MCF 10A (cell line): ENCODE measurements at regions of chr10 and their contacts with region 1.

Region 1: GRCh38 chr10:61903221-61903927 is 1.9 kb downstream of the ARID5B start:
- DNase-seq: peak; percentile 68
- H3K4me3 Mint-ChIP-seq: peak overlapping the region; percentile 90
- H3K27ac Mint-ChIP-seq: peak overlapping the region; percentile 100
- H3K4me1 Mint-ChIP-seq: peaks cover 16% of the 10 kb centered on the region
- H3K27me3 Mint-ChIP-seq: no peaks in the 10 kb centered on the region
- CTCF ChIP-seq: peak; percentile 22

Region 2: DNA sequence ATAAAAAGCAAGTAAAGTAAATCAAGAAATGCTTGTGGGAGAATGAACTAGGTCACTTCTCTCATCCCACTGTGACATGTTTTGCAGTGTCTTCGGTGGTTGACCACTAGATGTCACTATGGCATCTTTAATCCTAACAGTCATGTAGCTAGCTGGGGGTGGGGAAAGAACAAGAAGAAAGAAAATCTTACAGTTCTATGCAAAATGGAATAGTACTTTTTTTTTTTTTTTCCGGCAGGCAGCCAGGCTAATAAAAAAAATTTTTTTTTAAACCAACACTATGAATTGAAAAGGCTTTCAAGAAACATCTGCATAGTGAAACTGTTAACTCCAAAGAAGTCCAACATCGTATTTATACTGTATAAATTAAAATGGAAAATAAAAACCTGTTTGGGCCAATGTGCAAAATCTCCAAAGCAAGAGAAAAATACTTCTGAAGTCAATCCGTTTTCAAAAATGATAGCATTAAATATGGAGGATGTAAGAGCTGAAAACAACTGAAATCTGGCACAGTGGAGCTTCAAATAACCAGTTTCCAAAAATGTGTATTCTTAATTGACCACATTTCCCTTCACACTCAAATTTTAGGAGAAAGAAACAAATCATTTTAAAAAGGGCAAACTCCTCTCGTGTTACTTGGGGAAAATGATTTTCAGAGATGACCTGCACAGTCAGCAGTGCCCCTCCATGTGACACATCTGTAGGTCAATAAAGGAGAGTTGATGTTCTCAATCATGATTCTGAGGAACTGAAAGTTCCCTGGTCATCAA is 1086.6 kb before region 1 on chr10:
- CTCF ChIA-PET with region 1: interaction called, 5 read pairs
- POLR2A ChIA-PET with region 1: no interaction called
- intact Hi-C with region 1: loop called (anchors 5 kb)
- DNase-seq: peak; percentile 81
- H3K4me3 Mint-ChIP-seq: no peak overlapping the region
- H3K27ac Mint-ChIP-seq: no peak overlapping the region
- H3K4me1 Mint-ChIP-seq: no peaks in the 10 kb centered on the region
- H3K27me3 Mint-ChIP-seq: no peaks in the 10 kb centered on the region
- CTCF ChIP-seq: peak; percentile 72

Region 3: DNA sequence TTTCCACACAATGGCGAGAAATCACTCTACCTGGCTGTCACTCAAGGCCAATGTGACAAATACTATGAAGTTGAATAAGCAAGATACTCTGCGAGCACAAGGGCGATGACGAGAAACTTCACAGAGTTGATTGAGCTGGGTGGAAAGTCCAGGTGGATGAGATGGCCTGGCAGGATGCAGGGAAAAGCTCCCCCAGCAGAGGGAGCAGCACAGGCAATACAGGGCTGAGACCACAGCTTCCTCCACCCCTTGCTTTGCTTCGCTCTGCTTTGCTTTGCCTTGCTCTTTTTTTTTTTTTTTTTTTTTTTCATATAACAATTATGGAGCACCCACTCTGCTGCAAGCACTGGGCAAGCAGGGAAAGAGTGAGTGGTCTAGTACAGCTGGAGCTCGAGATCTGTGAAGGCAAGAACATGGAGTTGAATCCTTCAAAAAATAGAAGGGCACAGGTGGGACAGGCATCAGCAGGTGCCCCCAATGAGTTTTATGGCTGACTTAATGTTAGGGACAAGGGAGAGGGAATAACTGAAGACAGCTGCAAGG is 152.4 kb before region 1 on chr10:
- CTCF ChIA-PET with region 1: interaction called, 6 read pairs
- POLR2A ChIA-PET with region 1: interaction called, 19 read pairs
- intact Hi-C with region 1: loop called (anchors 1 kb)
- DNase-seq: peak; percentile 68
- H3K4me3 Mint-ChIP-seq: no peak overlapping the region
- H3K27ac Mint-ChIP-seq: peak overlapping the region; percentile 86
- H3K4me1 Mint-ChIP-seq: peaks cover 31% of the 10 kb centered on the region
- H3K27me3 Mint-ChIP-seq: no peaks in the 10 kb centered on the region
- CTCF ChIP-seq: peak; percentile 47

Region 4: GRCh38 chr10:61937631-61938351 is 34.4 kb after region 1 on chr10:
- CTCF ChIA-PET with region 1: interaction called, 6 read pairs
- POLR2A ChIA-PET with region 1: interaction called, 135 read pairs
- intact Hi-C with region 1: loop called (anchors 2 kb)
- DNase-seq: no peak
- H3K4me3 Mint-ChIP-seq: no peak overlapping the region
- H3K27ac Mint-ChIP-seq: peak overlapping the region; percentile 93
- H3K4me1 Mint-ChIP-seq: peaks cover 27% of the 10 kb centered on the region
- H3K27me3 Mint-ChIP-seq: no peaks in the 10 kb centered on the region
- CTCF ChIP-seq: no peak

Region 5: DNA sequence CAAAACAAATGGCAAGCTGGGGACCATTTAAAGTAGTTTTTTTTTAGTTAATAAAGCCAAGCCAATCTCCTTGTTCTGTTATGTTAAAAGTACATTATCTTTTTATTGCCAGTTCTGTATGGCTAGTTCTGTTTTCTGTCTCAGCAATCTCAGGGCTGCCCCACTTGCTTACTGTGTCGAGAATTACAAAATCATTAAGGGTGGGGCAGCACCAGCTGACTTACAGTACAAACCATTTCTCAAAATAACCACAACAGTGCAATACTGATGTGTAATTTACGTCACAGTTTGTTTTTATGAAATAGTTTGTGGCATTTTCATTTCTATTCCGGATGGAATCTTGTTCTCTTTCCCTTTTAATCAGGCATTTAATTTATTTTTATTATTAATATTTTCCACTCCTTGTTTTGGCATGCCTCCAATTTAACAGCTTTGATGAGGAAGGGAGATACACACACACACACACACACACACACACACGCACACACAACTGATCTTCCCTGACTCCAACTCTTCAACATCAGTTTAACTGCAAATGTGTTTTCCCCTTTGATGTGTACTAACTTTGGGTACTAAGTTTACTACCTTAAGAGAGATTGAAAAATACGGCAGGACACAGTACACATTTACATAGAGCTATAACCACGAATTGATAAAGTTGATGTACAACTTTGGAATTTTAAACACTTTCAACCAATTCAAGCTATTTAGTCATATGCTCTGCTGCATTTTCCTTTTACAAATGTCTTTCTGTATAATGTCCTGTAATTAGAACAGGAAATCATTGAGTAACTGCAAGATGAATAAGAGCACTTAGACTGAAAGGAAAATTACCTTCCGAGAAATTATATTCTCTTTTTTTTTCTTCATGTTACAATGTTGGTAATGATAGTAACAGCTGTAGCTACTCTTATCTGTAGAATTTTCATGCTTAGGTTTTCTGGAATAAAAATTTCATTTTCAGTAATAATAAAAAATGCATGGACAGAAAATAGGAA is 89.6 kb after region 1 on chr10:
- CTCF ChIA-PET with region 1: interaction called, 11 read pairs
- POLR2A ChIA-PET with region 1: interaction called, 115 read pairs
- intact Hi-C with region 1: loop called (anchors 2 kb)
- DNase-seq: peak; percentile 90
- H3K4me3 Mint-ChIP-seq: peak overlapping the region; percentile 75
- H3K27ac Mint-ChIP-seq: peak overlapping the region; percentile 96
- H3K4me1 Mint-ChIP-seq: peaks cover 38% of the 10 kb centered on the region
- H3K27me3 Mint-ChIP-seq: no peaks in the 10 kb centered on the region
- CTCF ChIP-seq: no peak

Region 6: GRCh38 chr10:62050893-62051433 is 147.6 kb after region 1 on chr10:
- CTCF ChIA-PET with region 1: interaction called, 14 read pairs
- POLR2A ChIA-PET with region 1: interaction called, 98 read pairs
- intact Hi-C with region 1: no loop called
- DNase-seq: peak; percentile 90
- H3K4me3 Mint-ChIP-seq: peak overlapping the region; percentile 84
- H3K27ac Mint-ChIP-seq: peak overlapping the region; percentile 96
- H3K4me1 Mint-ChIP-seq: peaks cover 28% of the 10 kb centered on the region
- H3K27me3 Mint-ChIP-seq: no peaks in the 10 kb centered on the region
- CTCF ChIP-seq: no peak

Region 7: GRCh38 chr10:62205750-62206399 is 302.5 kb after region 1 on chr10:
- CTCF ChIA-PET with region 1: no interaction called
- POLR2A ChIA-PET with region 1: no interaction called
- intact Hi-C with region 1: no loop called
- DNase-seq: no peak
- H3K4me3 Mint-ChIP-seq: no peak overlapping the region
- H3K27ac Mint-ChIP-seq: no peak overlapping the region
- H3K4me1 Mint-ChIP-seq: no peaks in the 10 kb centered on the region
- H3K27me3 Mint-ChIP-seq: no peaks in the 10 kb centered on the region
- CTCF ChIP-seq: no peak